ENCODE measurements at regions of chr3 and their contacts with region 1.

Region 1: GRCh38 chr3:15405448-15406050 is 21.8 kb downstream of the METTL6 start:
- DNase-seq: no peak
- H3K4me3 ChIP-seq: no peak overlapping the region
- CTCF ChIP-seq: peak; percentile 48

Region 2: GRCh38 chr3:15108082-15108545 is 297.4 kb before region 1 on chr3:
- CTCF ChIA-PET with region 1: interaction called, 10 read pairs
- POLR2A ChIA-PET with region 1: no interaction called
- DNase-seq: no peak
- H3K4me3 ChIP-seq: no peak overlapping the region
- CTCF ChIP-seq: peak; percentile 86

Region 3: GRCh38 chr3:15256861-15257341 is 148.6 kb before region 1 on chr3:
- CTCF ChIA-PET with region 1: interaction called, 20 read pairs
- POLR2A ChIA-PET with region 1: no interaction called
- DNase-seq: no peak
- H3K4me3 ChIP-seq: no peak overlapping the region
- CTCF ChIP-seq: no peak

Region 4: GRCh38 chr3:15377961-15378791 is 27.4 kb before region 1 on chr3:
- CTCF ChIA-PET with region 1: interaction called, 15 read pairs
- POLR2A ChIA-PET with region 1: no interaction called
- DNase-seq: peak; percentile 61
- H3K4me3 ChIP-seq: no peak overlapping the region
- CTCF ChIP-seq: peak; percentile 69

Region 5: DNA sequence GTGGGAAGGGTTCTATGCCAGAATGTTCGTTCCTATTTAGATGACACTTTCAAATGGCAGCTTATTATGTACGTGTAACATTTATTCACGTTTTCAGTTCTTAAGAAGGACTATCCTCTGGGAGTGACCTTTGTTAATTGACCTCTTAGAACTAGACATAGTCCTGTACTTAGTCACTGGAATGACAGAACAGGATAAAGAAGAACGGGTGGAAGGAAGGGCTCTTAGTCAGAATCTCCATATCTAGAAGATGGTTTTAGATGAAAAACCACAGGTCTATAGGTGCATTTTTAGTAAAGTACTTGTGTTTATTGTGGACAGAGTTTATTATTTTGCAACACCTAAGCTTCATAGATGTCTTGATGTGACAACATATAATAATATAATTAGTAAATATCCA is 15.3 kb after region 1 on chr3:
- CTCF ChIA-PET with region 1: interaction called, 16 read pairs
- POLR2A ChIA-PET with region 1: no interaction called
- DNase-seq: no peak
- H3K4me3 ChIP-seq: no peak overlapping the region
- CTCF ChIP-seq: no peak

Measured in AG04449 (cell line).